ENCODE measurements at regions of chr3 and their contacts with region 1.

Region 1: GRCh38 chr3:33538678-33539339 is 98.6 kb upstream of the UBP1 start:
- DNase-seq: no peak
- ATAC-seq: peak; percentile 70 to 82 (median 77)
- H3K4me3 ChIP-seq: no peak overlapping the region
- H3K27ac ChIP-seq: peak overlapping the region; percentile 32 to 79 (median 76)
- H3K4me1 ChIP-seq: peaks cover 0 to 21% (median 1%) of the 10 kb centered on the region in 12 donors
- H3K27me3 ChIP-seq: no peaks in the 10 kb centered on the region
- CTCF ChIP-seq: no peak
- POLR2A ChIP-seq: no peak

Region 2: DNA sequence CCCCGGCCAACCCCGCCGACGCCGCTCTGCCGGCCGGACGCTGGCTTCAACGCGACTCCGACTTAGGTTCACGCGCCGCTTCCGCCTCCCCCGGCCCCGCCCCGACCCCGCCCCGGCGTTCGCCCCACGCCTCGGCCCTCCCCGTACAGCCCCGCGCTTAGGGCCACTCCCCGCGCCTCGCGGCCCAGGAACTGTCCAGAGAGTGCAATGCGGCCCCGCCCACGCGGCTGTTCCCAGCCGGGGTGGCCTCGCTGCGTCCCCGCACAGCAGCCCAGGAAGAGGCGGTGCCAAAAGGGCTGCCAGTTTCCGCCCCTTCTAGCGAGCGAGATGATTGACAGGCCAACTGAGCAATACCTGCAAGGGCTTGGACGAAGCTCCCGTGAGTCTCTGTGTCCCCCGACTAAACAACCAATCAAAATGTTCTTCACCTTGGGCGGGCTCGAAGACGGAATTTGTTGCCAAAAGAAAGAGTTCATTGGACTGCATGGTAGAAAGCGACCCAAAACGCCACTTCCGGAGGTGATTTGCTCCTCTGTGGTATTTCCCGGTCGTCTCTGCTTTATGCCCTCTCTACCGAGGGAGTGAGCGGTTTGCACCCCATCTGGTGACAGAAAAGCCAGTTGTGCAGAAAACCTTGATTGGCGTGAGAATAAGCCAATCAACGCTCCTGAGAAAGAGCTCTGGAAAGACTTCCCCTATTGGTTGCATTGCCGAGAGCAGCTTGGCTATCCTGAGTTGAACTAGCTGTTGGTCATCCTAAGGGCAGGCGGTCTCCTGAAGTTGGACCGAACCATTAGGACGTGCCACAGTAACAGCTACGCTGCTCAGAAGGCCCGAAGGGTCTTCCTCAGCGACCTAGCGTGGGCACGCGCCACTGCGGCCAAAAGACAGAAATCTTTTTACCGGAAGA is 98.2 kb before region 1 on chr3 and contains the start of gene UBP1:
- intact Hi-C with region 1: loop called in 1 of 10 experiments (anchors 2 kb)
- DNase-seq: peak; percentile 100
- ATAC-seq: peak; percentile 95 to 97 (median 96)
- H3K4me3 ChIP-seq: peak within 1 kb of the TSS; percentile 47 to 97 (median 78)
- H3K27ac ChIP-seq: peak within 1 kb of the TSS; percentile 93 to 100 (median 97)
- H3K4me1 ChIP-seq: peaks cover 5 to 45% (median 36%) of the 10 kb centered on the region in 12 donors
- H3K27me3 ChIP-seq: no peaks in the 10 kb centered on the region
- CTCF ChIP-seq: peak in 2 of 12 donors; percentile 5 to 24
- POLR2A ChIP-seq: peak in 1 of 2 donors; percentile 80
- total RNA-seq, gene UBP1: 33.0 to 53.5 (median 46.6) TPM

Region 3: GRCh38 chr3:34475851-34476250 is 937.0 kb after region 1 on chr3:
- intact Hi-C with region 1: no loop called
- DNase-seq: no peak
- ATAC-seq: no peak
- H3K4me3 ChIP-seq: no peak overlapping the region
- H3K27ac ChIP-seq: no peak overlapping the region
- H3K4me1 ChIP-seq: no peaks in the 10 kb centered on the region
- H3K27me3 ChIP-seq: no peaks in the 10 kb centered on the region
- CTCF ChIP-seq: no peak
- POLR2A ChIP-seq: no peak